H1 (cell line): ENCODE measurements at regions of chr9 and their contacts with region 1.

Region 1: DNA sequence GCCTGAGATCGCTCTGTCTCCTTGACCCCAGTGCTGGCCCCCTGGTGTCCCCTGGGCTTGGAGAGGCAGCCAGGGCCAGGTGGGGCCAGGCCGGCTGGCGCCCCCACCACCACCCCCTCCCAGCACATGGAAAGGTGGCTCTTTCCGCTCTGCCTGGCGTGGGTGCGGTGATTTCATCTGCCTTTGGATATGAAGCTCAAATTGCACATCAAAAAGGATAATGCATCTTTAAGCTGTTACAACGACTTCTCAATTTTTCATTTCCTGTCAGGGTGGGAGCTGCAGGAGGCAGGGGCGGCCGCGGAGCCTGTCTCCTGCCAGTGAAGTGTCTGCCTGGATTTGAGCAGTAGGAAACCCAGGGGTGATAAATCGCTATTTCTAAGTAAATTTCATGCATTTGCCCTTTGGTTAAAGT is 169.2 kb upstream of the MVB12B start:
- DNase-seq: no peak
- H3K4me3 ChIP-seq: no peak overlapping the region
- H3K27ac ChIP-seq: no peak overlapping the region
- H3K4me1 ChIP-seq: peaks cover 0 to 10% (median 0%) of the 10 kb centered on the region in 4 experiments; a peak in 2 of 7 replicates
- H3K27me3 ChIP-seq: peaks cover 0 to 2% (median 0%) of the 10 kb centered on the region in 4 experiments; a peak in 2 of 7 replicates
- CTCF ChIP-seq: no peak
- EP300 ChIP-seq: no peak
- POLR2A ChIP-seq: no peak
- RAD21 ChIP-seq: no peak

Region 2: DNA sequence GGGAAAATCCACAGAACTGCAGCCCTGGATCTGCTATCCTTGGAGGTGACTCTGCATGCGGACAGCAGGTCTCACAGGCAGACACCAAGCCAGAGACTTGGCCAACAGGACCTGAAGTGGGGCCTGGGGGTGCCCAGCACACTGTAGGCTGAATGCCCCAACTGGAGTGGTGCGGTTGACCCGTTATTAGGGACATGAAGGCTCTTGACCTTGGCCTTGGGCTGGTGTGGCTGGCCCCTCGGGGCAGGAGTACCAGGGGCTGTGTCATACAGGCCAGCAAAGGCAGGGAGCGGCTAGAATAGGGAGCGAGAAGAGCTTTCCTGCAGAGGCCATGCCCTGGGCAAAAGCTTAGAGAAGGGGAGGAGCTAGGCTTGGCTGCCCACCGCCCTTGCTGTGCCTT is 16.0 kb after region 1 on chr9:
- CTCF ChIA-PET with region 1: interaction called, 12 read pairs
- POLR2A ChIA-PET with region 1: no interaction called
- DNase-seq: no peak
- H3K4me3 ChIP-seq: no peak overlapping the region
- H3K27ac ChIP-seq: no peak overlapping the region
- H3K4me1 ChIP-seq: no peaks in the 10 kb centered on the region
- H3K27me3 ChIP-seq: no peaks in the 10 kb centered on the region
- CTCF ChIP-seq: no peak
- EP300 ChIP-seq: no peak
- POLR2A ChIP-seq: no peak
- RAD21 ChIP-seq: no peak

Region 3: GRCh38 chr9:126198854-126199253 is 41.5 kb after region 1 on chr9:
- CTCF ChIA-PET with region 1: no interaction called
- POLR2A ChIA-PET with region 1: no interaction called
- DNase-seq: no peak
- H3K4me3 ChIP-seq: no peak overlapping the region
- H3K27ac ChIP-seq: no peak overlapping the region
- H3K4me1 ChIP-seq: peaks cover 0 to 2% (median 0%) of the 10 kb centered on the region in 4 experiments; a peak in 1 of 7 replicates
- H3K27me3 ChIP-seq: no peaks in the 10 kb centered on the region
- CTCF ChIP-seq: no peak
- EP300 ChIP-seq: no peak
- POLR2A ChIP-seq: no peak
- RAD21 ChIP-seq: no peak

Region 4: GRCh38 chr9:126347911-126348760 is 190.7 kb after region 1 on chr9:
- CTCF ChIA-PET with region 1: no interaction called
- POLR2A ChIA-PET with region 1: no interaction called
- DNase-seq: no peak
- H3K4me3 ChIP-seq: no peak overlapping the region
- H3K27ac ChIP-seq: no peak overlapping the region
- H3K4me1 ChIP-seq: peaks cover 2 to 11% (median 7%) of the 10 kb centered on the region in 4 experiments
- H3K27me3 ChIP-seq: 0 out of 7 replicates have a peak, but pooled peaks cover 0 to 2% (median 0%) of the 10 kb centered on the region in 4 experiments
- CTCF ChIP-seq: no peak
- EP300 ChIP-seq: no peak
- POLR2A ChIP-seq: no peak
- RAD21 ChIP-seq: no peak